Left cardiac atrium (tissue), 4 donors: ENCODE measurements at regions of chr5 and their contacts with region 1.

Region 1: GRCh38 chr5:111550279-111551020 is 38.1 kb upstream of the STARD4 start:
- DNase-seq: peak; percentile 83
- ATAC-seq: peak; percentile 85 to 94

Region 2: DNA sequence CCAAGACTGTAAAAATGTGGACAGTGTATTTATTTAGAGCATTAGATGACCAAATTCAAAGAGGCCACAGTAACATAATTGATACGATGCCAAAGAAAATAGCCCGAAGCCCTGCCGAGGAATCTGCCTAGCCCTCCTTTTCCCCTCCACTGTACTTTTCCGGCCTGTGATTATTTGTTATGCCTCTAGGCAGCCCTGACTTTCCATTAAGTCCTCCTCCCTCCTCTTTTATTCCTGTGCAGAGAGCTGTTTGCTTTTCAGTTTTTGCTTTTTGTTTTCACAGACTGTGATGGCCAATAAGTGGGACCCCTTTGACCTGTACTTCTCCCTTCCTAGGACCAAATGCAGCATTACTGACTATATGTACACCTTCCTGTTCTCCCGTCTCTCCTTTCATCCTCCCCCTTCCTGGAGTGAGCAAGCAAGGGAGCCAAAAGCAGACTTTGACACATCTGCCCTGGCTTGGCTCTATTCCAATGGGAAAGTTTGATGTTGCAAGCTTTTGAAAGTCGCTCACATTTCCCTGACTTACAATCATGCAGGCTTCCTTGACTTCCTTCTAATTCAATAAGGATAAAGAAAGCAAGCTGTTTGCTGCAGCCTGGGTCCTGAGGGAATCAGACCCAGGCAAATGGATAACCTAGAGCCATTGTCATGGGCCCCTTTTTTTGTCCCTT is 130.4 kb after region 1 on chr5:
- intact Hi-C with region 1: loop called in 1 of 2 experiments (anchors 5 kb)
- DNase-seq: peak; percentile 62
- ATAC-seq: peak; percentile 85 to 92

Region 3: GRCh38 chr5:111757355-111758283 is 207.2 kb after region 1 on chr5:
- intact Hi-C with region 1: loop called in 1 of 2 experiments (anchors 2 kb)
- DNase-seq: peak; percentile 94
- ATAC-seq: peak; percentile 91 to 92